ENCODE measurements at regions of chr1 and their contacts with region 1.

Region 1: DNA sequence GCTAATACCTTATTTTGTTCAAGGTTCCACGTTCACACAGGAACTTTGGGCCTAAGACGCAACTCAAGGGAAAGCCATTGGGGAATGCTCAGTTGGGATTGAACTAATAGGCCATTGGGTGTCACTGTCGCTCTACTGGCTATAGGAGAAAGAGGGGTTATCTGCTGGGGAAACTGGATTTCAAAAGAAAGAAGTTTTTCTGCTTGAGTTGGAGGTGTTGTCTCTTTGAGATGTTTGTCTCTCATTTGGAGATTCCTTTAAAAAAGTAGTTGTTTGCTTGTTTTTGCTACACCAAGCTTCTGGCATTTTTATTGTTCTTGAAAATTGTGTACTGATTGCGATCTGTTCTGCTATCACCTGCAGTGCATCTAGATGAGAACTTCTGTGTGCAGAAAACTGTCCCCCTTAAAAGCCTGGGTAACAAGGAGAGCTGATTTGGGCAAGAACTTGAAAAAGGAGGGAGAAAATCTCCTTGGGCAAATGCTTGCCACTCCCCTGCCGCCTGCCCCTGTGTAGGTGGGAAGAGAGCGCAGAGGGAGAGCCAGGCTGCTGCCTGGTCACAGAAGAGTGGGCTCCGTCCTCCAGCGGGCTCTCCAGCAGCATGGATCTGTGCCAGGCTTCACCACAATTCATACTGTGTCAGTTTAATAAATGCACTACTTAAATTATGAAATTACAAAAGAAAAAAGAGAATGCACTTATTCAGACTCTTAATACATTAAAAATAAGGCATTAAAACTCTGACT is 39.9 kb downstream of the PEX14 start:
- DNase-seq: peak; percentile 45 to 65 (median 48)
- ATAC-seq: peak; percentile 54
- H3K4me3 ChIP-seq: no peak overlapping the region
- H3K27ac ChIP-seq: no peak overlapping the region
- H3K4me1 ChIP-seq: peaks cover 23 to 28% of the 10 kb centered on the region in 2 experiments; a peak in 4 of 5 replicates
- H3K27me3 ChIP-seq: no peaks in the 10 kb centered on the region
- CTCF ChIP-seq: peak; percentile 58 to 84 (median 64)
- EP300 ChIP-seq: no peak
- POLR2A ChIP-seq: no peak
- RAD21 ChIP-seq: peak; percentile 76 to 87

Region 2: GRCh38 chr1:10398734-10399623 is 115.7 kb before region 1 on chr1 and contains the start of gene PGD:
- CTCF ChIA-PET with region 1: no interaction called
- POLR2A ChIA-PET with region 1: no interaction called
- in situ Hi-C with region 1: no loop called
- intact Hi-C with region 1: no loop called
- DNase-seq: peak; percentile 100
- ATAC-seq: peak; percentile 96
- H3K4me3 ChIP-seq: peak within 1 kb of the TSS; percentile 66
- H3K27ac ChIP-seq: peak within 1 kb of the TSS; percentile 92
- H3K4me1 ChIP-seq: peaks cover 21 to 23% of the 10 kb centered on the region in 2 experiments
- H3K27me3 ChIP-seq: no peaks in the 10 kb centered on the region
- CTCF ChIP-seq: peak in 1 of 3 experiments; percentile 17; a peak in 2 of 6 replicates
- EP300 ChIP-seq: no peak
- POLR2A ChIP-seq: peak; percentile 98
- RAD21 ChIP-seq: 0 out of 4 replicates have a peak, but pooled peaks of 1 of the 2 experiments have one; percentile 6
- polyA plus RNA-seq, gene PGD: 292 to 542 TPM

Region 3: GRCh38 chr1:10540277-10541005 is 25.8 kb after region 1 on chr1:
- CTCF ChIA-PET with region 1: no interaction called
- POLR2A ChIA-PET with region 1: no interaction called
- in situ Hi-C with region 1: no loop called
- intact Hi-C with region 1: no loop called
- DNase-seq: no peak
- ATAC-seq: no peak
- H3K4me3 ChIP-seq: no peak overlapping the region
- H3K27ac ChIP-seq: no peak overlapping the region
- H3K4me1 ChIP-seq: peaks cover 8 to 12% of the 10 kb centered on the region in 2 experiments; a peak in 4 of 5 replicates
- H3K27me3 ChIP-seq: no peaks in the 10 kb centered on the region
- CTCF ChIP-seq: no peak
- EP300 ChIP-seq: no peak
- POLR2A ChIP-seq: no peak
- RAD21 ChIP-seq: no peak

Region 4: DNA sequence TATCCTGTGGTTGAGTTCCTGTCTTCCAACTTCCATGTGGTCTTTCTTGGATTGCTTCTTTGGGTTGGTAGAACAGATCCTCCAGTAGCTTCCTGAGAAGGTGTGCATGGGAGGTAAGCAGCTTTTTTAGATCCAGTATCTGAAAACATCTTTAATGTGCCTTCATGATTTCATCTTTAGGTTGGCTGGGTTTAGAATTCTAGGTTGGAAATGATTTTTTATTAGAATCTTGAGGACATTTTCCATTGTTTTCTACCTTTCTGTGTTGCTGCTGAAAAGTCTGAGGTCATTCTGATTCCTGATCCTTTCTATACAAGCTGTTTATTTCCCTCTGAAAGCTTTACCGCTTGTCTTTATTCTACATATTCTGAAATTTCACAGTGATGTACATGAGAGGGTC is 54.9 kb after region 1 on chr1:
- CTCF ChIA-PET with region 1: no interaction called
- POLR2A ChIA-PET with region 1: no interaction called
- in situ Hi-C with region 1: no loop called
- intact Hi-C with region 1: no loop called
- DNase-seq: no peak
- ATAC-seq: no peak
- H3K4me3 ChIP-seq: no peak overlapping the region
- H3K27ac ChIP-seq: no peak overlapping the region
- H3K4me1 ChIP-seq: no peaks in the 10 kb centered on the region
- H3K27me3 ChIP-seq: no peaks in the 10 kb centered on the region
- CTCF ChIP-seq: no peak
- EP300 ChIP-seq: no peak
- POLR2A ChIP-seq: no peak
- RAD21 ChIP-seq: no peak

Region 5: GRCh38 chr1:10686404-10687040 is 171.9 kb after region 1 on chr1:
- CTCF ChIA-PET with region 1: no interaction called
- POLR2A ChIA-PET with region 1: no interaction called
- in situ Hi-C with region 1: no loop called
- intact Hi-C with region 1: loop called (anchors 1 kb)
- DNase-seq: no peak
- ATAC-seq: no peak
- H3K4me3 ChIP-seq: no peak overlapping the region
- H3K27ac ChIP-seq: no peak overlapping the region
- H3K4me1 ChIP-seq: peaks cover 10 to 45% of the 10 kb centered on the region in 2 experiments; a peak in 4 of 5 replicates
- H3K27me3 ChIP-seq: peaks cover 16 to 29% of the 10 kb centered on the region in 2 experiments; a peak in 3 of 5 replicates
- CTCF ChIP-seq: 0 out of 6 replicates have a peak, but pooled peaks of 1 of the 3 experiments have one; percentile 12
- EP300 ChIP-seq: no peak
- POLR2A ChIP-seq: no peak
- RAD21 ChIP-seq: no peak

Measured in K562 (cell line).